Panc1 (cell line): ENCODE measurements at regions of chr17 and their contacts with region 1.

Region 1: GRCh38 chr17:8100111-8100510 is 12.6 kb upstream of the ALOX12B start:
- DNase-seq: no peak
- ATAC-seq: no peak
- H3K4me3 ChIP-seq: no peak overlapping the region
- H3K27ac ChIP-seq: no peak overlapping the region
- H3K4me1 ChIP-seq: no peaks in the 10 kb centered on the region
- H3K27me3 ChIP-seq: no peaks in the 10 kb centered on the region
- CTCF ChIP-seq: no peak

Region 2: DNA sequence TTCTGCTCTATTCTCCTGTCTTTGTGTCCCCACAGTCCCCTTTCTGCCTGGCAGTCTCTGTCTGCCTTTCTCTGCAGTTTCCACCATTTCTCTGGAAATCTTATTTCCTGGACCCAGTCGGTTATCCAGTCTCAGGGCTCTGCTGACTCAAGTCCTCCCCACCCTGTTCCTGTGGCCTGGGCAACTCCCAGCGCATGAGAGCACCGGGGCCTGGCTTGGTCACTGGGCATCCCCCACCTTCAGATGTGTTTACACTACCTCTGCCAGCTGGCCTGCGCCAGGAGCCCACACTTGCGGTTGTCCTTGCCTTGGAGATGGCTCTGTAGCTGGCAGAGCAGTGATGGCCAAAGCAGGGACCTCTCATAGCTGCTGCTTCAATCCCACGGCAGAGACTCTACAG is 80.4 kb before region 1 on chr17:
- CTCF ChIA-PET with region 1: no interaction called
- POLR2A ChIA-PET with region 1: interaction called, 32 read pairs
- in situ Hi-C with region 1: no loop called
- intact Hi-C with region 1: no loop called
- DNase-seq: no peak
- ATAC-seq: no peak
- H3K4me3 ChIP-seq: no peak overlapping the region
- H3K27ac ChIP-seq: no peak overlapping the region
- H3K4me1 ChIP-seq: no peaks in the 10 kb centered on the region
- H3K27me3 ChIP-seq: no peaks in the 10 kb centered on the region
- CTCF ChIP-seq: no peak